ENCODE measurements at regions of chr14 and their contacts with region 1.

Region 1: GRCh38 chr14:100221533-100222223 is 17.3 kb upstream of the YY1 start:
- DNase-seq: peak; percentile 60 to 63
- H3K4me3 ChIP-seq: peak overlapping the region; percentile 40
- H3K4me3 Mint-ChIP-seq: no peak overlapping the region
- H3K27ac Mint-ChIP-seq: no peak overlapping the region
- H3K4me1 ChIP-seq: peaks cover 13% of the 10 kb centered on the region; the same call in 1 of the 2 replicates
- H3K4me1 Mint-ChIP-seq: no peaks in the 10 kb centered on the region
- H3K27me3 ChIP-seq: no peaks in the 10 kb centered on the region
- H3K27me3 Mint-ChIP-seq: no peaks in the 10 kb centered on the region
- CTCF ChIP-seq: no peak

Region 2: DNA sequence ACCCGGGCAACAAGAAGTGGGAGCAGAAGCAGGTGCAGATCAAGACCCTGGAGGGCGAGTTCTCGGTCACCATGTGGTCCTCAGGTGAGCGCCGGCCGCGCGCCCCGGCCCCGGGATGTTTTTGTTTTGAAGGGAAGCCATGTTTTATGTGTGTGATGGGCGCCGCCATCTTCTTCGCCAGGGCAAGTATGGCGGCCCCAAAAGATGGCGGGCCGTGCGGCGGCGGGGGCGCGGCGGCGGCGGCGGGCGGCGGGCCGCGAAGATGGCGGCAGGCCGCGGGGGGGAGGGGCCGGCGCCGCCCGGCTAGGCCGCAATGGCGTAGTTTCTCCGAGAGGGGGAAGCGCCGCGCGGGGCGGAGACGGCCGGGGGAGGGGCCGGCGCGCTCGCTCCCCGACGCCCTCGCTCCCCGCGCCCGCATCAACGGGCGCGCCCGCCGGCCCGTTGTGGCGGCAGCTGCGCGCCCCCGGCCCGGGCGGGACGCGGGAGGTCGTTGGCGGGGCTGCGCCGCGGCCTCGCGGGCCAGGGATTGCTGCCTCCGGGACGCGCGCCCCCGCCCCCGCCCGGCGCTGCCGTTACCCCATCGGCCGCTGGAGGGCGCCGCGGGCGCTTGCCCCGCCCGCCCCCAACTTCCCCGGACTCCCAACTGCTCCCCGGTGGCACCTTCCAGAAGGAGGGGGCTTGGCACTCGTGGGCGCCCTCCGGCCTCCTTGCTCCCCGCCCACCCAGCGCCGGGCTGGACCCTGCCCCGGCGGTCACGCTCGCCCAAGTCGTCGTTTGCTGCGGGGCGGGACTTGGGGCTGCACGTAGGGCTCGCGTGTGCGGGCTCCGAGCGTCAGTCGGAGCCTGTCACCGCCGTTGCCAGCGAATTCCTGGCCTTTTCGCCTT is 18.4 kb after region 1 on chr14:
- CTCF ChIA-PET with region 1: interaction called, 3 read pairs
- POLR2A ChIA-PET with region 1: interaction called, 11 read pairs
- intact Hi-C with region 1: no loop called
- DNase-seq: peak; percentile 90 to 91
- H3K4me3 ChIP-seq: peak overlapping the region; percentile 100
- H3K4me3 Mint-ChIP-seq: peak overlapping the region; percentile 84
- H3K27ac Mint-ChIP-seq: peak overlapping the region; percentile 91
- H3K4me1 ChIP-seq: peaks cover 7% of the 10 kb centered on the region; the same call in 1 of the 2 replicates
- H3K4me1 Mint-ChIP-seq: peaks cover 9% of the 10 kb centered on the region
- H3K27me3 ChIP-seq: no peaks in the 10 kb centered on the region
- H3K27me3 Mint-ChIP-seq: no peaks in the 10 kb centered on the region
- CTCF ChIP-seq: peak; percentile 55 to 68

Measured in Caco-2 (cell line).